Naive thymus-derived CD8-positive, alpha-beta T cell (primary cell): ENCODE measurements at regions of chr15 and their contacts with region 1.

Region 1: DNA sequence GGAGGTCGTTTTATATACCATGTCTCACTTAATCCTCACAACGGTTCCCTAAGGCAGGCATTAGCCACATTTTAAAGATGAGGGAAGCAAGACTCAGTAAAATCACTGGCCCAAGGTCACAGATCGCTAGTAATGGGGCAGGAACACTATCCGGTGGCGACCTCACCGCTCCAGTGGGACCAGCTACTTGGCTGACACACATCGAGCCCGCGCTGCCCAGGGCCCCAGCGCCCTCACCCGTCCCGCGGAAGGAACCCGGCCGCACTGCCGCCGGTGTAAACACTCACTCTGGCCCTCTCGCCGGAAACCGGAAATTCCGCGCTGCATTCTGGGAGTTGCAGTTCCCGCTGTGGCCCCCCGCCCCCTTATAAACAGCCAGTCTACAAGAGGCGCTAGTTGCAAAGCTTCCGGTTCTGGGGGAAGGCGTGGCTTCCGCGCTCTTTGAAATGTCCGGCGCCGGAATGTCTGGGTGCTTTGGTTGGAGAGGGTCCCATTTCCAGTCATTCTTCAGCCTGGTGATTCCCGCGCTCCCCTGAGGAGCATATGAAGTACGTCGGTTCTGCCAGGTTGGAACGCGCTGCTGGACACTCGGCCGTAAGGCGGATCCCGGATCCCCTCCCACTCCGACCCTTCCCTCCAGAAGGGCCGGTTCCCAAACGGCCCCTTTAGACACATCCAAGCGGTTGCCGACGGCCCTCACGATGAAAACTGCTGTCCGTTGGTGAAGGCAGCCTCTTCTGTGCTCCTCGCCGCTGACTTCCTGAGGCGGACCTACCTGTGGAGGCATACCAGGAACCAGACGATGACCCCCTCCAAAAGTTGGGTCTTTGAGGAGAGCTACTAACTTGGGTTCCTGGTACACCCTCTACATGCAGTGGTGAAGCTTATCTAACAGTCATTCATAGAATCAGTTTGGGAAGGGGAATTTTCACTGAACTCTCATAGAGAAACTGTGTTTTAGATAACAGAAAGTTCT is at the start of gene UBL7:
- DNase-seq: peak; percentile 89 to 97 (median 92)
- ATAC-seq: peak; percentile 98
- H3K4me3 Mint-ChIP-seq: peak within 1 kb of the TSS; percentile 87 to 96 (median 94)
- H3K27ac Mint-ChIP-seq: peak within 1 kb of the TSS; percentile 62 to 97 (median 93)
- H3K4me1 Mint-ChIP-seq: peaks cover 31 to 59% (median 56%) of the 10 kb centered on the region in 4 donors
- H3K27me3 Mint-ChIP-seq: no peaks in the 10 kb centered on the region
- polyA plus RNA-seq, gene UBL7: 113 to 151 (median 150) TPM

Region 2: DNA sequence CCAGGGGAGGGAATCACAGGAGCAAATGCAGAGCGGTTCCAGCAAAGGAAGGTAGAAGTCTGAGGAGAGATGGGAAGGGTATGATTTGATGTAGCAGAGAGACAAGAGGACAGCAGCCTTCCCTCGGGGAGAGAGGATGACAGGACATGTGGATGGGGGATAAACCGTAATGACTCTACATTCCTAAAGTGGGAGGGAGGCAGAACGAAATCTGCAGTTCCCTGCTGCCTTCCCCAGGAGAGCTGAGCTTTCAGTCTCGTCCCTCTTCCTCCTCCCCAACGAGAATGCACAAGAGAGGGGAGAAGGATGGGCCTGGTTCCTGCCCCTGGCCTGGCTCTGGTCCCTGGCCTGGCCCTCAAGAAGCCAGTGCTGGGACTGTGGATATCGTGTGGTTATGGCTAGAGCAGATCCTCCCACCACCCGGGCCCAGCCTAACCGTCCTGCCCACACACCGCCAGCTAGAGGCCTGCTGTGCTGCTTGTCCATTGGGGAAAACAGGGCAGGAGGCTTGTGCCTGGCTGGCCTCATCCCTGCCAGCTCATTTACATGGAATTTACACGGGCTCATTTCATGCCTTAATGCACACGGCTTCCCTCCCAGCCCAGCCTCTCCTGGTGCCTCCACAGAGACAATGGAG is 54.0 kb before region 1 on chr15:
- POLR2A ChIA-PET with region 1: no interaction called
- DNase-seq: no peak
- ATAC-seq: no peak
- H3K4me3 Mint-ChIP-seq: no peak overlapping the region
- H3K27ac Mint-ChIP-seq: peak overlapping the region in 2 of 10 donors; percentile 48 to 85
- H3K4me1 Mint-ChIP-seq: peaks cover 10 to 37% (median 24%) of the 10 kb centered on the region in 4 donors
- H3K27me3 Mint-ChIP-seq: no peaks in the 10 kb centered on the region

Region 3: GRCh38 chr15:74449643-74450205 is 11.4 kb before region 1 on chr15:
- POLR2A ChIA-PET with region 1: interaction called, 10 read pairs
- DNase-seq: no peak
- ATAC-seq: no peak
- H3K4me3 Mint-ChIP-seq: no peak overlapping the region
- H3K27ac Mint-ChIP-seq: peak overlapping the region in 1 of 10 donors; percentile 56
- H3K4me1 Mint-ChIP-seq: peaks cover 16 to 33% (median 24%) of the 10 kb centered on the region in 4 donors
- H3K27me3 Mint-ChIP-seq: no peaks in the 10 kb centered on the region

Region 4: GRCh38 chr15:74540761-74541493 is 79.8 kb after region 1 on chr15 and contains the start of gene ARID3B:
- POLR2A ChIA-PET with region 1: interaction called, 17 read pairs
- DNase-seq: peak; percentile 86 to 98 (median 92)
- ATAC-seq: peak; percentile 87 to 89
- H3K4me3 Mint-ChIP-seq: peak within 1 kb of the TSS; percentile 89 to 99 (median 97)
- H3K27ac Mint-ChIP-seq: peak within 1 kb of the TSS; percentile 90 to 99 (median 97)
- H3K4me1 Mint-ChIP-seq: peaks cover 37 to 59% (median 57%) of the 10 kb centered on the region in 4 donors
- H3K27me3 Mint-ChIP-seq: no peaks in the 10 kb centered on the region
- polyA plus RNA-seq, gene ARID3B: 4.0 to 13.2 (median 7.5) TPM

Region 5: DNA sequence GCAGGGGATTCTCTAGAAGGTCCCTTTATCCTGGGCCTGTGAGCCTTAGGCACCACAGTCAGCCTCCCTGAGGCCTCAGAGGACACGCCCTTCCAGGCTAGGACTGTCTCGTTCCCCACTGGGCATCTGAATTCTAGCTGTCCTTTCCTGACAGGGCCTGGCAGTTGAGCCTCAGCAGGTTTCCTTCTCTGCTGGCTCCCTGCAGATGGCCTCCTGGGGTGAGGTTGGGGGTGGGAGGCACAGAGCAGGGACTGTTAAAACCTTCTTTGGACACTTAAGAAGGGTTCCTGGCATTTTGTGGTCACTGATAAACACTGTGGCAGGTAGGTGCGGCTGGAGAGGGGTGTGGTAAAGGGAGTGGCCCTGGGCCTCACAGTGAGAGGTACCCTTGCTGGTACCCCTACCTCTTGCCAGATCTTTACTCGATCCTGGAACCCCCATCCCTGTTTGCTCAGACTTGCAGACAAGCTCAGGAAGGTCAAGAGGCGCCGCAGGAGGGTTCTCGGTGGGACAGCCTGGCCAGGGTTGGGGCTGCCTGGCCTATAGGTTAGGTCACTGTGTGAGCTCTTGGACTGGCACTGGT is 163.0 kb after region 1 on chr15:
- POLR2A ChIA-PET with region 1: no interaction called
- DNase-seq: no peak
- ATAC-seq: no peak
- H3K4me3 Mint-ChIP-seq: peak overlapping the region in 2 of 10 donors; percentile 34 to 38
- H3K27ac Mint-ChIP-seq: peak overlapping the region; percentile 27 to 96 (median 84)
- H3K4me1 Mint-ChIP-seq: peaks cover 38 to 86% (median 65%) of the 10 kb centered on the region in 4 donors
- H3K27me3 Mint-ChIP-seq: no peaks in the 10 kb centered on the region